ENCODE measurements at regions of chr12 and their contacts with region 1.

Region 1: DNA sequence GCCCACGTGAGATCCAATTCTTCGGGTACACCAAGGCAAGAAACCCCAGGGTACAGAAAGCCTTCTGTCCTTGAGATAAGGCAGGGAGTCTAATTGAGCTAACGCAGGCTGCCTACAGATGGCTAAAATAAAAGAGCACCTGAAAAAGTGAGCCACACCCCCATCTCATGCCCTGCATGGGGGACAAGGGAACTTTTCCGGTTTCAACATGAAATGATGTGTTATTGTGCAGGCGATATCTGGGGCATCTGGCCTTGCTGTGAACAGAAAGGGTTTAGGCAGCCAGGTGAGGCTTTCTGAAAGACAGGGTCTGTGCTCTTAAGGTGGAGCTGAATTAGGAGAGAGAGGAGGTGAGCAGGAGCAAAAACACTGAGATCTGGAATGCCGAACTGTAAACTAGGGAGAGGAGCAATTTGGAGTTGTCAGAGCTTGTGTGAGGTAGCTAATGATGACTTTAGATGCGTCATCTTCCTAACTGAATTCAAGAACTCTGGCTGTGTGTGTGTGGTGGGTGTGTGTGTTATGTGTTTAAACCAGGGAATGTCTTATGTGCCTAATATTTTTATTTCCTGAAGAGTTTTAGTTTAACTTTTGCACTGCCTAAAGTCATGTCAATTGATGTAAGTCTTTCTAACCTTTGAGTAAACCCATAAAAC is 20.1 kb upstream of the LDHB start:
- DNase-seq: peak; percentile 30
- ATAC-seq: peak; percentile 31
- H3K4me3 Mint-ChIP-seq: peak overlapping the region; percentile 2
- H3K27ac Mint-ChIP-seq: peak overlapping the region; percentile 72
- H3K4me1 Mint-ChIP-seq: peaks cover 51% of the 10 kb centered on the region
- H3K27me3 Mint-ChIP-seq: no peaks in the 10 kb centered on the region

Region 2: DNA sequence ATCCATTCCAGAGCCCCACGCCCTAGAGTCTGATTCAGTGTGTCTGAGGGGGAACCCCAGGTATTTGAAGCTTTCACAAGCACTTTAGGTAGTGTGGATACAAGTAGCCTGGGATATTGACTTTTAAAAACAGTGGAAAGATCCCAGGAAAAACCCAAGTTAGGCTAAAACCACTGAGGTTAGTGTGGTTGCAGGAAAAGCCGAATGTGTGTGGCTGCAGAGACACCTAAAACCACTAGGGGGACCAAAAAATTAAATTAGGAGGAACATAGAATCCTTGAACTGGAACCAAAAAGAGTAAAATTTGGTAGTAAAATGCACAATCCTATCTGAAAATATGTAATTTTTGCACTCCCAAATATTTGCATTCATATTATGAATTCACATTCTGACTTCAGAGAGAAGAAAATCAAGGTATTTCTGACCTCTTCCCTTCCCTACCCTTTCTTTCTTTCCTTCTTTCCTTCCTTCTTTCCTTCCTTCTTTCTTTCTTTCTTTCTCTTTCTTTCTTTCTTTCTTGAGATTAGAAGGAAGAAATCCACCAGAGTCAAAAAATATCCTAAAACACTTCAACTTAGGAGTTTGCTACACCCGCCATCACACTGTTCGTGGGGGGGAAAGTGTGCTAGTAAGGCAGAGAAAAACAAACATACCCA is 380.9 kb before region 1 on chr12:
- CTCF ChIA-PET with region 1: interaction called, 4 read pairs
- POLR2A ChIA-PET with region 1: no interaction called
- intact Hi-C with region 1: loop called (anchors 1 to 2 kb)
- DNase-seq: peak; percentile 18
- ATAC-seq: no peak
- H3K4me3 Mint-ChIP-seq: no peak overlapping the region
- H3K27ac Mint-ChIP-seq: no peak overlapping the region
- H3K4me1 Mint-ChIP-seq: no peaks in the 10 kb centered on the region
- H3K27me3 Mint-ChIP-seq: peaks cover 3% of the 10 kb centered on the region

Region 3: DNA sequence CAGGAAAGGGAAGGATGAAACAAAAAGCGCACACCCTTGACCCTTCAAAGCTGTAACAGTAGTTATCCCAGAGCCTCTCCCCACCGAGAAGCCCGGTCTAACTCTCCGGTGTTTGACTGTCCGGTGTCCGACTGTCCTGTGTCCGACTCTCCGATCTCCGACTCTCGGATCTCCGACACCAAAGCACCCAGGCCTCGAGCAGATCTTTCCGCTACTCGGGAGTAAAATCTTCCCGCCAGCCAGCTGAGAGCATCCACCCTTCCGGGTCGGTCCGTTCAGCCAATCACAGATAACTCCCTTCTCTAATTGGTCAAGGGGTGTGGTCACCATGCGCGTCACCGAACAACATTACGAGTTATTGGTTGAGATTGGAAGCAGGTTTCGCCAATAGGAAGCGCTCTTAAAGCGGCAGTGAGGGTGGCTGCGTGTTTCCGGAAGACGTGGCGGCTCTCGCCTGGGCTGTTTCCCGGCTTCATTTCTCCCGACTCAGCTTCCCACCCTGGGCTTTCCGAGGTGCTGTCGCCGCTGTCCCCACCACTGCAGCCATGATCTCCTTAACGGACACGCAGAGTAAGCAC is 176.3 kb before region 1 on chr12 and contains the starts of genes GOLT1B and RECQL:
- CTCF ChIA-PET with region 1: interaction called, 6 read pairs
- POLR2A ChIA-PET with region 1: interaction called, 3 read pairs
- intact Hi-C with region 1: loop called (anchors 1 kb)
- DNase-seq: peak; percentile 93
- ATAC-seq: peak; percentile 93
- H3K4me3 Mint-ChIP-seq: no peak within 1 kb of the TSS
- H3K27ac Mint-ChIP-seq: no peak within 1 kb of the TSS
- H3K4me1 Mint-ChIP-seq: peaks cover 44% of the 10 kb centered on the region
- H3K27me3 Mint-ChIP-seq: no peaks in the 10 kb centered on the region
- total RNA-seq, gene GOLT1B: 25.6 to 31.2 TPM
- total RNA-seq, gene RECQL: 64.4 to 92.8 TPM

Region 4: GRCh38 chr12:21613931-21614330 is 63.8 kb before region 1 on chr12:
- CTCF ChIA-PET with region 1: interaction called, 15 read pairs
- POLR2A ChIA-PET with region 1: no interaction called
- intact Hi-C with region 1: loop called in 1 of 2 experiments (anchors 2 kb)
- DNase-seq: no peak
- ATAC-seq: no peak
- H3K4me3 Mint-ChIP-seq: no peak overlapping the region
- H3K27ac Mint-ChIP-seq: no peak overlapping the region
- H3K4me1 Mint-ChIP-seq: peaks cover 59% of the 10 kb centered on the region
- H3K27me3 Mint-ChIP-seq: no peaks in the 10 kb centered on the region

Region 5: GRCh38 chr12:21650833-21651396 is 26.8 kb before region 1 on chr12:
- CTCF ChIA-PET with region 1: interaction called, 13 read pairs
- POLR2A ChIA-PET with region 1: interaction called, 3 read pairs
- intact Hi-C with region 1: loop called in 1 of 2 experiments (anchors 2 kb)
- DNase-seq: no peak
- ATAC-seq: no peak
- H3K4me3 Mint-ChIP-seq: no peak overlapping the region
- H3K27ac Mint-ChIP-seq: peak overlapping the region; percentile 69
- H3K4me1 Mint-ChIP-seq: peaks cover 85% of the 10 kb centered on the region
- H3K27me3 Mint-ChIP-seq: no peaks in the 10 kb centered on the region

Region 6: DNA sequence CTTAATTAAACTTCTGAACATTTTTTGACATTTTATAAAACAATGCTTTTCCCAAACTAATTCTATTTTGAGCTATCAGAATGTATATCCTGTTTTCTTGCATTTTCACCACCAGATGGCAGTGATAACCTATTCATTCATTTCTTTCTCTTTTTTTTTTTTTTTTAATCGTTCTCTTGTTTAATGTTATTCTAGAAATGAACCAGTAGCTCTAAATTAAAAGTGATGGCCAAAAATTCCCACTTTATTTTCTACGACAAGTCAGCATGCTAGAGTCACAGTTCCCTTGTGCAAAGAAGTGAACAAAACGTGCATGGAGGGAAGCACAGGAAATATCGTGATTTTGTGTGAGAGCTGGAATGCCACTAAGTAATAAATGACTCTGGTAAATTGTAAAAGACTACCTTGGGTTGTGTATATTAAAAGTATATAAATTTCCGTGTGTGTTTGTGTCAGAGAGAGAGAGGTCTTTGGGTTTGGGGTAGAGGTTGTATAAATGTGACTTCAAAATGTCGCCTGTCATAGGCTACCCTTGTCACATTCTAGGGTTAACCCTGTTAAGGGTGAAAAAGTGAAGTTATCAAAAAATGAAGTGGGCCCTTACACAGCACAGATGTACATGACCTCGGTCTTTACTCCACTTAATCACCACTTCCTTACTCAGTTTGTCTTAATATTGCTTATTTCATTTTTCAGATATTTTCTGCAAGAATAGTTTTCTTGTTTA is 20.3 kb after region 1 on chr12:
- CTCF ChIA-PET with region 1: interaction called, 11 read pairs
- POLR2A ChIA-PET with region 1: no interaction called
- intact Hi-C with region 1: no loop called
- DNase-seq: no peak
- ATAC-seq: no peak
- H3K4me3 Mint-ChIP-seq: no peak overlapping the region
- H3K27ac Mint-ChIP-seq: no peak overlapping the region
- H3K4me1 Mint-ChIP-seq: peaks cover 12% of the 10 kb centered on the region
- H3K27me3 Mint-ChIP-seq: no peaks in the 10 kb centered on the region

Region 7: DNA sequence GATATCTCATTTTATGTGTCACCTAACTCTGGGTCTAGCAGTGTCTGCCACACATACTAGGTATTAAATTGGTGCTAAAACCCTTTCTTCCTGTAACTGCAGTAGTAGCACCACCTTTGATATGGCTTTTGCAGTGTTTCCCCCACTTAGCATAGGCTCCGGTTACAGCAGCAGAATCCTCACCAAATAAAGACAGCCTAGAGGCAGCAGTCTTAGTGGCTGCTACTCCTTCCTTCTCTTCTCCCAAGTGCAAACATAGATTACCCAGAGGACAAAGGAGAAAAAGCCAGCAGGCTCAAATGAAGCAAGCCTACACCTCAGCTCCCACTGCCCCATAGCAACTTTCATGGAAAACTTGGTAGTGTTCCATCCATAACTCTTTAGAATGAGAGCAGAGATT is 293.6 kb after region 1 on chr12:
- CTCF ChIA-PET with region 1: no interaction called
- POLR2A ChIA-PET with region 1: no interaction called
- intact Hi-C with region 1: no loop called
- DNase-seq: no peak
- ATAC-seq: no peak
- H3K4me3 Mint-ChIP-seq: no peak overlapping the region
- H3K27ac Mint-ChIP-seq: no peak overlapping the region
- H3K4me1 Mint-ChIP-seq: no peaks in the 10 kb centered on the region
- H3K27me3 Mint-ChIP-seq: peaks cover 6% of the 10 kb centered on the region

Region 8: GRCh38 chr12:22064968-22065367 is 387.2 kb after region 1 on chr12:
- CTCF ChIA-PET with region 1: no interaction called
- POLR2A ChIA-PET with region 1: no interaction called
- intact Hi-C with region 1: no loop called
- DNase-seq: no peak
- ATAC-seq: no peak
- H3K4me3 Mint-ChIP-seq: no peak overlapping the region
- H3K27ac Mint-ChIP-seq: no peak overlapping the region
- H3K4me1 Mint-ChIP-seq: peaks cover 7% of the 10 kb centered on the region
- H3K27me3 Mint-ChIP-seq: no peaks in the 10 kb centered on the region